Psoas muscle (tissue), 8 donors: ENCODE measurements at regions of chr6 and their contacts with region 1.

Region 1: GRCh38 chr6:148578245-148578732 is 168.5 kb upstream of the UST start:
- DNase-seq: peak; percentile 78 to 90
- ATAC-seq: peak; percentile 97 to 100 (median 100)
- H3K4me3 ChIP-seq: no peak overlapping the region
- H3K27ac ChIP-seq: no peak overlapping the region
- H3K4me1 ChIP-seq: no peaks in the 10 kb centered on the region
- H3K27me3 ChIP-seq: no peaks in the 10 kb centered on the region
- CTCF ChIP-seq: peak; percentile 89

Region 2: GRCh38 chr6:148611234-148611633 is 32.9 kb after region 1 on chr6:
- intact Hi-C with region 1: loop called in 1 of 2 experiments (anchors 5 kb)
- DNase-seq: peak; percentile 71 to 83
- ATAC-seq: peak; percentile 97 to 99 (median 98)
- H3K4me3 ChIP-seq: no peak overlapping the region
- H3K27ac ChIP-seq: peak overlapping the region; percentile 76
- H3K4me1 ChIP-seq: peaks cover 11% of the 10 kb centered on the region
- H3K27me3 ChIP-seq: no peaks in the 10 kb centered on the region
- CTCF ChIP-seq: no peak

Region 3: GRCh38 chr6:148677594-148678476 is 99.5 kb after region 1 on chr6:
- intact Hi-C with region 1: no loop called
- DNase-seq: no peak
- ATAC-seq: no peak
- H3K4me3 ChIP-seq: no peak overlapping the region
- H3K27ac ChIP-seq: no peak overlapping the region
- H3K4me1 ChIP-seq: no peaks in the 10 kb centered on the region
- H3K27me3 ChIP-seq: no peaks in the 10 kb centered on the region
- CTCF ChIP-seq: no peak

Region 4: GRCh38 chr6:148700741-148701311 is 122.5 kb after region 1 on chr6:
- intact Hi-C with region 1: loop called (anchors 2 to 5 kb)
- DNase-seq: no peak
- ATAC-seq: peak in 1 of 4 donors; percentile 32
- H3K4me3 ChIP-seq: peak overlapping the region; percentile 46
- H3K27ac ChIP-seq: no peak overlapping the region
- H3K4me1 ChIP-seq: no peaks in the 10 kb centered on the region
- H3K27me3 ChIP-seq: no peaks in the 10 kb centered on the region
- CTCF ChIP-seq: no peak